Panc1 (cell line): ENCODE measurements at regions of chr7 and their contacts with region 1.

Region 1: GRCh38 chr7:25196132-25196891 is 32.0 kb downstream of the NPVF start:
- DNase-seq: no peak
- ATAC-seq: no peak
- H3K4me3 ChIP-seq: no peak overlapping the region
- H3K27ac ChIP-seq: no peak overlapping the region
- H3K4me1 ChIP-seq: no peaks in the 10 kb centered on the region
- H3K27me3 ChIP-seq: peaks cover 9% of the 10 kb centered on the region; the same call in 1 of the 2 replicates
- CTCF ChIP-seq: no peak

Region 2: DNA sequence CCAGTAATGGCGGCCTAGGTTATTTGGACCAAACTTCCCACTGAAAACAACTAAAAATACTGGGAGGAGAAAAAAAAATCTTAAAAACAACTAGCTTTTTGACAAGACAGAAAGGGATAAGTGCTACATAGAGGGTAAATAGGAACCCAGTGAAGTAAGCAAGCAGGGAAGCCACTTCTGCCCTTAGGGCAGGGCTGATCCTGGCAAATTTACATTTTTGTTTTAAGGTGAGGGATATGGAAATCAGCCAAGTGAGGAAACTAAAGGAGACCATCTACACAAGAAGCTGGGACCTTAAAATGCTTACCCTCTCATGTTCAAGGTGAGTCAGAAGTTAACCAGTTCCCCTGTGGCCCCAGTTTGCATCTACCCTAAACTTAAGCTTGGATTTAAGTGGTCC is 24.8 kb before region 1 on chr7:
- CTCF ChIA-PET with region 1: interaction called, 4 read pairs
- POLR2A ChIA-PET with region 1: interaction called, 10 read pairs
- in situ Hi-C with region 1: no loop called
- intact Hi-C with region 1: no loop called
- DNase-seq: no peak
- ATAC-seq: no peak
- H3K4me3 ChIP-seq: no peak overlapping the region
- H3K27ac ChIP-seq: no peak overlapping the region
- H3K4me1 ChIP-seq: no peaks in the 10 kb centered on the region
- H3K27me3 ChIP-seq: no peaks in the 10 kb centered on the region
- CTCF ChIP-seq: no peak

Region 3: GRCh38 chr7:26267601-26268166 is 1071.4 kb after region 1 on chr7:
- CTCF ChIA-PET with region 1: no interaction called
- POLR2A ChIA-PET with region 1: no interaction called
- in situ Hi-C with region 1: no loop called
- intact Hi-C with region 1: no loop called
- DNase-seq: no peak
- ATAC-seq: no peak
- H3K4me3 ChIP-seq: no peak overlapping the region
- H3K27ac ChIP-seq: no peak overlapping the region
- H3K4me1 ChIP-seq: no peaks in the 10 kb centered on the region
- H3K27me3 ChIP-seq: no peaks in the 10 kb centered on the region
- CTCF ChIP-seq: no peak